HEK293 (cell line): ENCODE measurements at regions of chr5 and their contacts with region 1.

Region 1: DNA sequence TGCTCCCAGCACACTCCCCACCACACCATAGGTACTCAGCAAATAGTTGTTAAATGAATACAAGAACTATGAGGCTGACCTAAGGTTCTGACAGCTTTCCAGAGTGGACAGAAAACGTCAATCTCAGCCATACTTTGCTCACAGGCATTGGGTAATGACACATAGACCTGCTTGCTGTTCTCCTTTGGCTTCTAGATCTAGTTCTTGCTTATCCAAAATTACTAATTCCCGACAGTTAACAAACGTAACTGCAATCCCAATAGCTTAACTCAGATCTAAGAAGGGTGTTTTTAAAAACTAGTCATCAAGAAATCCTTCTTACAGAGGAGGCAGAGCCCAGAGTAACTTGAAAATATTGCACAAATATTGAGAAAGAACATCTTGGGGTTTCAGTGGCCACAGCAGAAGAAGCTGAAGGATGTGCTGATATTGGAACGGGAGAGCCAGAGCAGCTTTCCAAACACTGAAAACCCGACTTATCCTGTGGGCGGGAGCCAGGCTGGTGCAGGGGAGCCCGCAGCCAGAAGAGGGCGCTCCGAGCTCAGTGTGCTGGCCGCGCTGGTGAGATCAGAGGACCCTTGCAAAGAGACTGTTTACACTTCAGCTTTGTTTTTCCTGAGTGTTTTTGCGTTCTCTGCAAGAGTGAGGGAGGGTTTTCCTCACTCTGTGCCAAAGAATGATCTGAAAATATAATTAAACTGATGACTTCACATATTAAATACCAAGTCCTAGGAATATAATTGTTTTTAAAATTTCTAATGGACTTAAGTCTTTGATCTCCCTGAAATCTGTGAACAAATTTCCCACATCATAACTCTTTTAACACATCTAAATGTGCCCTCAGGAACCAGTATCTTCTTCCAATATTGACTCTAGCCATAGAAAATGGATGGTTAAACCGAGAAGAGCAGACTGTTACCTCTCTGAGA is 30.3 kb downstream of the FGF1 start:
- H3K4me3 ChIP-seq: no peak overlapping the region
- H3K27ac ChIP-seq: no peak overlapping the region
- H3K4me1 ChIP-seq: no peaks in the 10 kb centered on the region
- CTCF ChIP-seq: peak; percentile 90

Region 2: DNA sequence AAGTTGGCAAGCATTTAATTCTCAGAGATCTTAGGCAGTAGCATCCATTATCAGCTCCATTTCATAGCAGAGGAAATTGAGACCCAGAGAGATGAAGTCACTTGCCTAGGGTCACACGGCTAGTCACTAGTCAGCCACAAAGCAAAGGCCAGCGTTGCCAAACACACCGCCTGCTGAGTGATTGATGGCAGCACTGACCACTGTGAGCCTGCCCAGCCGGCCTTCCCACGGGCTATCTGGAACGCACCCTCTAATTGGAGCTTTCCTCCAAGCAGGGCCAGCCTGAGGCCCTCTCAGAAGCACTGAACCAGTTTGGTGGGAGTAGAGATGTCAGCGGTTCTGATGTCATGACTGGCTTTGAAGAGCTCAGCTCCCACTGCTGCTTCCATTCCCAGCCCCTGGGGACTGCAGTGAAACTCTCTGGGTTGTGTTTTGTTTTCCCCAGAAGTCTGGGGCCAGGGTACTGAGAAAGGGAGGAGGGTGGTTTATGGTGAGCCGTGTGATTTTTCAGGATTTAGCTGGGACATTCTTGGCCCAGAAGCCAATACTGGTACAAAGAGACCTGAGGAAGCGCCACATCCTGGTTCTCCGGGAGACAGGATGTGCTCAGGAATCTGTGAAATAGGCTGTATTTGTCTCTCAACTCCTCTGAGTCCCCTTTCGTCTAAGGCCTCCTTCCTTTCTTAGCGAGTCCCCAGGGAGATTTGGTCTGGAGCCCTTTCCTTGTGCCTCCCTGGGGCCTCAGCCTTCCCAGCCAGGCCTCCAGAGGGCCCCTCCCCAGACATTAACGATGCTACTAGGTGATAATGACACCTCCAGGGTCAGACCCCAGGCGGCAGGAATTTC is 375.3 kb before region 1 on chr5:
- CTCF ChIA-PET with region 1: no interaction called
- POLR2A ChIA-PET with region 1: no interaction called
- H3K4me3 ChIP-seq: no peak overlapping the region
- H3K27ac ChIP-seq: peak overlapping the region; percentile 52; the same call in 1 of the 2 replicates
- H3K4me1 ChIP-seq: peaks cover 13% of the 10 kb centered on the region
- CTCF ChIP-seq: no peak

Region 3: GRCh38 chr5:142587354-142587965 is 68.1 kb before region 1 on chr5:
- CTCF ChIA-PET with region 1: interaction called, 10 read pairs
- POLR2A ChIA-PET with region 1: no interaction called
- H3K4me3 ChIP-seq: no peak overlapping the region
- H3K27ac ChIP-seq: no peak overlapping the region
- H3K4me1 ChIP-seq: no peaks in the 10 kb centered on the region
- CTCF ChIP-seq: no peak

Region 4: GRCh38 chr5:142611154-142611553 is 44.4 kb before region 1 on chr5:
- CTCF ChIA-PET with region 1: interaction called, 30 read pairs
- POLR2A ChIA-PET with region 1: no interaction called
- H3K4me3 ChIP-seq: no peak overlapping the region
- H3K27ac ChIP-seq: no peak overlapping the region
- H3K4me1 ChIP-seq: no peaks in the 10 kb centered on the region
- CTCF ChIP-seq: peak; percentile 80

Region 5: GRCh38 chr5:142644640-142645361 is 10.8 kb before region 1 on chr5:
- CTCF ChIA-PET with region 1: interaction called, 52 read pairs
- POLR2A ChIA-PET with region 1: no interaction called
- H3K4me3 ChIP-seq: peak overlapping the region; percentile 21
- H3K27ac ChIP-seq: no peak overlapping the region
- H3K4me1 ChIP-seq: peaks cover 5% of the 10 kb centered on the region; the same call in 1 of the 2 replicates
- CTCF ChIP-seq: no peak

Region 6: GRCh38 chr5:142677198-142677597 is 21.6 kb after region 1 on chr5:
- CTCF ChIA-PET with region 1: interaction called, 28 read pairs
- POLR2A ChIA-PET with region 1: no interaction called
- H3K4me3 ChIP-seq: no peak overlapping the region
- H3K27ac ChIP-seq: no peak overlapping the region
- H3K4me1 ChIP-seq: no peaks in the 10 kb centered on the region
- CTCF ChIP-seq: no peak

Region 7: GRCh38 chr5:142881076-142881783 is 225.6 kb after region 1 on chr5:
- CTCF ChIA-PET with region 1: interaction called, 21 read pairs
- POLR2A ChIA-PET with region 1: no interaction called
- H3K4me3 ChIP-seq: no peak overlapping the region
- H3K27ac ChIP-seq: no peak overlapping the region
- H3K4me1 ChIP-seq: no peaks in the 10 kb centered on the region
- CTCF ChIP-seq: no peak